ENCODE measurements at regions of chr4 and their contacts with region 1.

Region 1: GRCh38 chr4:114386637-114387233 is 211.9 kb upstream of the UGT8 start:
- DNase-seq: no peak
- H3K4me3 Mint-ChIP-seq: no peak overlapping the region
- H3K27ac Mint-ChIP-seq: no peak overlapping the region
- H3K4me1 Mint-ChIP-seq: no peaks in the 10 kb centered on the region
- H3K27me3 Mint-ChIP-seq: no peaks in the 10 kb centered on the region

Region 2: GRCh38 chr4:114193624-114194399 is 192.9 kb before region 1 on chr4:
- intact Hi-C with region 1: no loop called
- DNase-seq: no peak
- H3K4me3 Mint-ChIP-seq: no peak overlapping the region
- H3K27ac Mint-ChIP-seq: no peak overlapping the region
- H3K4me1 Mint-ChIP-seq: no peaks in the 10 kb centered on the region
- H3K27me3 Mint-ChIP-seq: no peaks in the 10 kb centered on the region

Region 3: GRCh38 chr4:114287079-114287696 is 99.5 kb before region 1 on chr4:
- intact Hi-C with region 1: no loop called
- DNase-seq: no peak
- H3K4me3 Mint-ChIP-seq: no peak overlapping the region
- H3K27ac Mint-ChIP-seq: no peak overlapping the region
- H3K4me1 Mint-ChIP-seq: no peaks in the 10 kb centered on the region
- H3K27me3 Mint-ChIP-seq: no peaks in the 10 kb centered on the region

Region 4: GRCh38 chr4:114659386-114660008 is 272.8 kb after region 1 on chr4:
- intact Hi-C with region 1: loop called (anchors 1 kb)
- DNase-seq: peak; percentile 74
- H3K4me3 Mint-ChIP-seq: no peak overlapping the region
- H3K27ac Mint-ChIP-seq: no peak overlapping the region
- H3K4me1 Mint-ChIP-seq: no peaks in the 10 kb centered on the region
- H3K27me3 Mint-ChIP-seq: peaks cover 5% of the 10 kb centered on the region

Region 5: GRCh38 chr4:114694770-114695169 is 308.0 kb after region 1 on chr4:
- intact Hi-C with region 1: loop called (anchors 2 kb)
- DNase-seq: no peak
- H3K4me3 Mint-ChIP-seq: no peak overlapping the region
- H3K27ac Mint-ChIP-seq: no peak overlapping the region
- H3K4me1 Mint-ChIP-seq: peaks cover 6% of the 10 kb centered on the region
- H3K27me3 Mint-ChIP-seq: peaks cover 3% of the 10 kb centered on the region

Measured in activated CD4-positive, alpha-beta T cell treated with anti-CD3 and anti-CD28 coated beads, Interleukin-2, amount 10 ng/mL, durations not matched to agents 24 days and 14 days (primary cell).